ENCODE measurements at regions of chr17 and their contacts with region 1.

Region 1: DNA sequence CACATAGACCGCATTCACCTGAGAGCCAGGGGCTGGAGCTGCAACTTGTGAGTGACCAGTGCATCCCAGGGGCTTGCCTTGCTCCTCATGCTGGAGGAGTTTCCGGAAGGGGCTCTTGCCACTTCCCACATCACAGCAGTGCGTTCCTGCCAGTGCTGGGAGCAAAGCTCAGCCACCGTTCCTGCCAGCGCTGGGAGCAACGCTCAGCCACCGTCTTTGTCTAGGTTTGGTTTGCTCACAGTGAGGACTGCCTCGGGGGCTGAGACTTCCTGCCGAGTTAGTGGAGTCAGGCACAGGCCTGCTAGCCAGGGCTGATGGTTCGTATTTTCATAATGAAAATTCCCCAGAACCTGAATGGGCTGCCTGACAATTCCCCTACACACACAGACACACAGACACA is 5.4 kb upstream of the CHRNE start:
- DNase-seq: no peak
- ATAC-seq: peak; percentile 20
- H3K4me3 Mint-ChIP-seq: no peak overlapping the region
- H3K27ac Mint-ChIP-seq: no peak overlapping the region
- H3K4me1 Mint-ChIP-seq: peaks cover 6% of the 10 kb centered on the region
- H3K27me3 Mint-ChIP-seq: no peaks in the 10 kb centered on the region

Region 2: GRCh38 chr17:4939796-4940624 is 31.7 kb after region 1 on chr17 and contains the starts of genes RNF167 and SLC25A11:
- CTCF ChIA-PET with region 1: interaction called, 24 read pairs
- DNase-seq: peak; percentile 99
- ATAC-seq: peak; percentile 84
- H3K4me3 Mint-ChIP-seq: peak within 1 kb of the TSS; percentile 98
- H3K27ac Mint-ChIP-seq: peak within 1 kb of the TSS; percentile 92
- H3K4me1 Mint-ChIP-seq: peaks cover 61% of the 10 kb centered on the region
- H3K27me3 Mint-ChIP-seq: no peaks in the 10 kb centered on the region
- total RNA-seq, gene RNF167: 226 to 273 TPM
- total RNA-seq, gene SLC25A11: 82.3 to 84.6 TPM

Region 3: DNA sequence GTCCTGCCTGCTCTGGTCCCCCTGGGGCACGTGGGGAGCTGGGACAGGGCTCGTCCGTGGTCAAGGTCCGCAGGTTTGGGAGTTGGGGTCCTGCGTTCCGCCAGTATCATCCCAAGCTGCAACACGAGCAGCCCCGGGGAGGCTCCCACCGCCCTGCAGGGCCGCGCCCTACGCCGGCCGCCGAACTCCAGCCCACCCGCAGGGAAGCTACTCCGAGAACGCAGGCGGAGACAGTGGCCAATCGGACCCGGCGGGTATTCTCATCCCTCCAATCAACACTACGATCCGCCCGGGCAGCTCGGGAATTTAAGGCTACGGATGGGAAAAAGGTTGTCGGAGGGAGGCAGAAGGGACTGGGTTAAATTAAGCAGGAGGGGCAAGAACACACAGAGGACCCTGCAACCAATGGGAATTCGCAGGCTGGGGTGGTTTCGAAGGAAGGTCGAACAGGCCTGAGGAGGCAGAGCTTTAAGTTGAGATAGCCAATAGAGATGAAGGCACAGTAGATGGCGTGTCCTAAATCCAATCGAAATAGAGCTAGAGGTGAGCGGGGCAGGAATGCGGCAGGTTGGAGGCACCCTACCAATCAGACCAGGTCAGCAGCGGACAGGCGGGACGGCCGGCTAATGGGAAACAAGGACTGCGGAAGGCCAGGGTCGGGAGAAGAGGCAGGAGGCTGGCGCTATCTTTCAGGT is 58.7 kb after region 1 on chr17:
- CTCF ChIA-PET with region 1: interaction called, 31 read pairs
- DNase-seq: peak; percentile 99
- ATAC-seq: peak; percentile 89
- H3K4me3 Mint-ChIP-seq: no peak overlapping the region
- H3K27ac Mint-ChIP-seq: no peak overlapping the region
- H3K4me1 Mint-ChIP-seq: peaks cover 36% of the 10 kb centered on the region
- H3K27me3 Mint-ChIP-seq: no peaks in the 10 kb centered on the region

Region 4: DNA sequence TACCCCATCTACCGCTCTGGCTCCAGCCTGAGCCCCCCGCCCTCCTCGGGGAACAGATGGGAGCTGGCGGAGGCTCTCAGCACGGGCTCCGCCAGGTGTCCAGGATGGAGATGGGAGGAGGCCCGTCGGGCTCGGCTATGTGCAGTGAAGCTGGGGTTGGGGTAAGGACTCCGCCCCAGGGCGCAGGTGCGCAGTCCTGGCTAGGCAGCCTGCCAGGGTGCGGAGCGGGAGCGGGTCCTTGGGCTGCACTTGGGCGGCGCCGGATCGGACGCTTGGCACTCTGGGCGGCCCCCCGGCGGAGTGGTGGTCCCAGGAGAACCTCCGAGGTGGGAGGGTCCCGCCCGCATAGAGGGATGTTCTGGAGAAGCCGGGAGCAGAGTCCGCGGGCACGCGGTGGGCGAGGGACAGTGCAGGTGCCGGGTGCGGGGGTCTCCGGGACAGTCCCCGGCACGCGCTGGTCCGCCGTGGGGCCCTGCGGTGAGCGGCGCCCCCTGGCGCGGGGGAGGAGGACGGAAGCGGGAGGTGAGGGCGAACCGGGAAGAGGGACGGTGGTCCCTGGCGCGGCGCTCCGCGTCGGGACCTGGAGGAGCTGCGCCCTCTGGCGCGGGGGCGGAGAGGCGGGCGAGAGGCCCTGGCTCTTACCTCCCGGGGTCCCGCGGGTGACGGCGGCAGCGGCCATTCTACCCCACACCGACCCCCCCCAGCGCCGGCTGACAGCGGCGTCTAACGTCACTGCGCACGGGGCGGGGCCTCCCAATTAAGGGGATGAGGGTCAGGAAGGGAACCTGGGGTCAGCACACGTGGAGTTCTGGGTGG is 78.9 kb after region 1 on chr17 and contains the start of gene CAMTA2:
- CTCF ChIA-PET with region 1: interaction called, 25 read pairs
- DNase-seq: peak; percentile 93
- ATAC-seq: peak; percentile 88
- H3K4me3 Mint-ChIP-seq: peak within 1 kb of the TSS; percentile 91
- H3K27ac Mint-ChIP-seq: peak within 1 kb of the TSS; percentile 93
- H3K4me1 Mint-ChIP-seq: peaks cover 36% of the 10 kb centered on the region
- H3K27me3 Mint-ChIP-seq: no peaks in the 10 kb centered on the region
- total RNA-seq, gene CAMTA2: 60.6 to 72.5 TPM

Measured in activated CD8-positive, alpha-beta memory T cell treated with anti-CD3 and anti-CD28 coated beads, Interleukin-2, amount 10 ng/mL, durations not matched to agents 7 days and 5 days (primary cell).